MCF 10A (cell line): ENCODE measurements at regions of chr21 and their contacts with region 1.

Region 1: DNA sequence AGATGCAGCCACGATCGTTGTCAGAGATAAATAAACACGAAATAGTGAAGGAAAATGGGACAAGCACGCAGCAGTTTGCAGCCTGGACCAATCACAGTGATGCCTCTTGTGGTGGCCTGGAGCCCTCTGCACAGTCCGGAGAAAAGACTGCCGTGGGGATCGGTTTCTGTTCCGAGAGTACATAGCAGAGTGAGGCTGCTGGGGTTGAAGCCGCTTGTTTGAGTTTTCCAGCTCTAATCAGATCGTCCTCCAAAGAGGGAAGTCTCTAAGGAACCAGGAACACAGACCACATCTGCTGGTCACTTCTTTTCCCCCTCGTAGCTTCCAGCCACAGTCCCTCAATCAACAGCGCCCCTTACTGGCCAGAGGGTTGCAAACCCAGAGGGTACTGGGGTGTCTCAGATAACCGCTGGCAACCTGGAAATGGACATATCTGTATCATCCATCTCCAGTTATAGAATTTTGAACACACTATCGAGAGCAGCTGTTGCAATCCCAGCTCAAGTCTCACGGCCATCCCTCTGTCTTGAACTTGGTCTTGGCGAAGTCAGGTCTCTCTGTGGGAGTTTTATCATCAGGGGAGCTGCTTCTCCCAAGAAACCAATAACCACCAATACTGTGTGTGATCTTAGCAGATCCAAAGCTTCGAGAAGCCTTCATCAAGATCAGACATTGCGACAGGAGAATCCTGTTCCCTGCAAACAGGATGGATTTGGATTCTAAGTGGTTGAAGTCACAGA is 57.4 kb downstream of the OLIG1 start:
- DNase-seq: peak; percentile 80
- H3K4me3 Mint-ChIP-seq: peak overlapping the region; percentile 64
- H3K27ac Mint-ChIP-seq: no peak overlapping the region
- H3K4me1 Mint-ChIP-seq: no peaks in the 10 kb centered on the region
- H3K27me3 Mint-ChIP-seq: peaks cover 65% of the 10 kb centered on the region
- CTCF ChIP-seq: peak; percentile 72

Region 2: GRCh38 chr21:32929633-32930038 is 197.7 kb before region 1 on chr21:
- CTCF ChIA-PET with region 1: interaction called, 10 read pairs
- POLR2A ChIA-PET with region 1: no interaction called
- intact Hi-C with region 1: no loop called
- DNase-seq: no peak
- H3K4me3 Mint-ChIP-seq: no peak overlapping the region
- H3K27ac Mint-ChIP-seq: no peak overlapping the region
- H3K4me1 Mint-ChIP-seq: no peaks in the 10 kb centered on the region
- H3K27me3 Mint-ChIP-seq: peaks cover 26% of the 10 kb centered on the region
- CTCF ChIP-seq: no peak

Region 3: GRCh38 chr21:32949701-32950100 is 177.6 kb before region 1 on chr21:
- CTCF ChIA-PET with region 1: interaction called, 13 read pairs
- POLR2A ChIA-PET with region 1: no interaction called
- intact Hi-C with region 1: no loop called
- DNase-seq: no peak
- H3K4me3 Mint-ChIP-seq: no peak overlapping the region
- H3K27ac Mint-ChIP-seq: no peak overlapping the region
- H3K4me1 Mint-ChIP-seq: no peaks in the 10 kb centered on the region
- H3K27me3 Mint-ChIP-seq: peaks cover 75% of the 10 kb centered on the region
- CTCF ChIP-seq: no peak

Region 4: DNA sequence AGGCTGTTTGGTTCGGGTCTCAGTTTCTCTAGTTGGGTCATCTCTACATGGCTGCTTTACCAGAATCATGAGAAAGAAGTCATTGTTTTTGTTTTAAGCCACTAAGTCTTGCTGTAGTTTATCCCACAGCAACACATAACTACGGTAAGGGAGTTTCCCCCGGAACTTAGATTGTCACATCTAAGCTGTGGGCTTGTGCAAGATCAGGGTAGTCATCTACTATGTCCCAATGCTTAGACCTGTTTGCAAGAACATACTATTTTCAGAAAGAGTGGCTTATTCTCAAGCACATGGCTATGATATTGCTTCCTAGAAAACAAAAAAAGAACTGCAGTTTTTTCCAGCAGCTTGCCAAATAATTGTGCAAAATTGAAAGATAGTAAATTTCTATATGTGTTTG is 119.6 kb before region 1 on chr21:
- CTCF ChIA-PET with region 1: interaction called, 19 read pairs
- POLR2A ChIA-PET with region 1: no interaction called
- intact Hi-C with region 1: no loop called
- DNase-seq: peak; percentile 84
- H3K4me3 Mint-ChIP-seq: no peak overlapping the region
- H3K27ac Mint-ChIP-seq: peak overlapping the region; percentile 35
- H3K4me1 Mint-ChIP-seq: peaks cover 26% of the 10 kb centered on the region
- H3K27me3 Mint-ChIP-seq: peaks cover 6% of the 10 kb centered on the region
- CTCF ChIP-seq: no peak

Region 5: DNA sequence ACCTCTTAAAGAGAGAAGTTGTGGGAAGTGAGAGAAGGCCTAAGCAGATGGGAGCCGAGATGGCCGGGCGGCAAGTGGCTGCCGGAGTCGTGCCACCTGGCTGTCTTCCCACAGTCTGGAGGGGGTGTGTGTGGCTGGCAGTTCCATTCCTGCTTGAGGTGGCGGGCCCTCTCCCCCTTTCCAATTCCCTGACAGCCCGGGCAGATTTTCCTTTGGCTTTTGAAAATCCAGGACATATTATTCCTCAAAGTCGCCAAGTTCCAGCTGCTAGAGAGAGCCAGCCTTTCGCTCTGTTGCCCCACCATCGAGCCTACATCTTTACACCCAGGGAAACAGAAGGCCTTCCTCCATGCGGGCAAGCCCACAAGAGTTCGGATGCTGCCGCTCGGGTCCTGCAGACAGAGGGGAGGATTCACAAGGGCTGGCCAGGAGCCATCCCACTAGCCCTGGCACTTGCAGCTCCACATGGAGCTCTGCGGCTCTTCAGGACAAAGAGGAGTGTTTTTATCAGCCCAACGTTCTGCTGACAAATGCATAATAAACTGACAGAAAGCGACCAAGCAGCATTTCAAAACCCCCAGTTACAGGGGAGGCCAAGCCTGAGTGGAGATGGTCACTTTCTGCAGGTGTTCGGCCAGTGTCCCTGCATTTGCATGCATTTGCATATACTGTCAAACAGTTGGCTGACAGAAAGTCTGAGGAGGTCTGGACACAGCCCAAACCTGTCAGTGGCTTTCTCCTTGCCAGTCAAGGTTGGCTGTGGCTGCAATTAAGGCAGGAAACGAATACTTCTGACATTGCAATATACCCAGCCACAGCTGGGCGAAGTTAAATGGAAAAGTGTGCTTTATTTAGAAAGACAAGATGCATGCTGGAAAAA is 11.5 kb before region 1 on chr21:
- CTCF ChIA-PET with region 1: interaction called, 24 read pairs
- POLR2A ChIA-PET with region 1: interaction called, 3 read pairs
- intact Hi-C with region 1: no loop called
- DNase-seq: no peak
- H3K4me3 Mint-ChIP-seq: no peak overlapping the region
- H3K27ac Mint-ChIP-seq: no peak overlapping the region
- H3K4me1 Mint-ChIP-seq: no peaks in the 10 kb centered on the region
- H3K27me3 Mint-ChIP-seq: peaks cover 92% of the 10 kb centered on the region
- CTCF ChIP-seq: no peak

Region 6: DNA sequence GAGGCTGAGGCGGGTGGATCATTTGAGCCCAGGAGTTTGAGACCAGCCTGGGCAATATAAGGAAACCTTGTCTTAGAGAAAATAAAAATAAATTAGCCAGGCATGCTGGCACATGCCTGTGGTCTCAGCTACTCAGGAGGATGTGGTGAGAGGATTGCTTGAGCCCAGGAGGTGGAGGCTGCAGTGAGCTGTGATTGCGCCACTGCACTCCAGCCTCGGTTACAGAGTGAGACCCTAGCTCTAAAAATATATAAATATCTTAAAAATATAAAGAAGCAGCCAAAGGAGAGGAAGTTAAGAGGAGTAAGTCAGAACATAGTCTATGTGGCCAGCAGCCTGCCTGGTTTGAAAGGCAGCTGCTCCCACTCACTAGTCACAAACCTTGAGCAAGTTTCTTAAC is 134.3 kb after region 1 on chr21:
- CTCF ChIA-PET with region 1: no interaction called
- POLR2A ChIA-PET with region 1: no interaction called
- intact Hi-C with region 1: no loop called
- DNase-seq: peak; percentile 57
- H3K4me3 Mint-ChIP-seq: no peak overlapping the region
- H3K27ac Mint-ChIP-seq: peak overlapping the region; percentile 81
- H3K4me1 Mint-ChIP-seq: peaks cover 14% of the 10 kb centered on the region
- H3K27me3 Mint-ChIP-seq: no peaks in the 10 kb centered on the region
- CTCF ChIP-seq: no peak